ENCODE measurements at regions of chr12 and their contacts with region 1.

Region 1: GRCh38 chr12:9027161-9028059 is 38.1 kb downstream of the KLRG1 start:
- DNase-seq: peak; percentile 73
- H3K4me3 Mint-ChIP-seq: peak overlapping the region; percentile 8
- H3K27ac Mint-ChIP-seq: peak overlapping the region; percentile 82
- H3K4me1 Mint-ChIP-seq: peaks cover 14% of the 10 kb centered on the region
- H3K27me3 Mint-ChIP-seq: peaks cover 2% of the 10 kb centered on the region

Region 2: GRCh38 chr12:8493084-8493483 is 534.3 kb before region 1 on chr12:
- intact Hi-C with region 1: loop called (anchors 10 kb)
- DNase-seq: peak; percentile 82
- H3K4me3 Mint-ChIP-seq: peak overlapping the region; percentile 38
- H3K27ac Mint-ChIP-seq: peak overlapping the region; percentile 71
- H3K4me1 Mint-ChIP-seq: peaks cover 22% of the 10 kb centered on the region
- H3K27me3 Mint-ChIP-seq: peaks cover 43% of the 10 kb centered on the region

Region 3: GRCh38 chr12:8949342-8950220 is 77.8 kb before region 1 on chr12 and contains the start of gene M6PR:
- intact Hi-C with region 1: loop called (anchors 1 kb)
- DNase-seq: peak; percentile 97
- H3K4me3 Mint-ChIP-seq: peak within 1 kb of the TSS; percentile 98
- H3K27ac Mint-ChIP-seq: peak within 1 kb of the TSS; percentile 93
- H3K4me1 Mint-ChIP-seq: peaks cover 50% of the 10 kb centered on the region
- H3K27me3 Mint-ChIP-seq: no peaks in the 10 kb centered on the region
- total RNA-seq, gene M6PR: 160 and 167 TPM in 2 replicates

Region 4: DNA sequence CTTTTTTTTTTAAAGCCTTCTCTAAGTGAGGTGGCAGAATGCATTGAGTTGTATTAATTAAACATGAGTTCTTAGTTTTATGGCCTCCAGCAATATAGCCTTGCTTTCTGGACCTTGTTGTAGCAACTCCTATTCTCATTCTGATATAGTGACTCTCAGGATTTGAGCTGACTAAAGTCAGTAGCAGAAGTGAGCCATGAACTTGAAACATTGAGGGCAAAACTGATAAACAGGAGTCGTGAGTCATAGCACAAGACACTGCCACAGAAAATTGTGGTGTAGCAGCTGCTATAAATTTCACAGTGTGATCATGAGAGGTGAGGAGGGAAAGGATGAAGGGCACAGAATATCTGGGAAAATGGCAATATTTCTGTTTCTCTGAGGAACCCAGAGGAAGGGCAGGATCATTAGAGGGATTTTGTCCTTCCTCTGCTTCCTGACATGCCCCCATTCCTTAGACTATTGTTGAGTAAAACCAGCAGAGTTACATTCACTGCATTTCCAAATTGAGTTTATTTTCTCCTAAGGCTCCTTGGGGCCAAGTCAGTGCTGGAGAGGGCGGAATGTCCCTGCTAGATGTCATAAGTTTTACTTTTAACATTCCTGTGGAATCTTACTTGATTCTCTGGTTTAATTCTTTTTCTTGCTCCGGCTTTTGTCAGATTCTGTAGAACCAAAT is 30.6 kb before region 1 on chr12:
- intact Hi-C with region 1: loop called (anchors 1 kb)
- DNase-seq: peak; percentile 70
- H3K4me3 Mint-ChIP-seq: no peak overlapping the region
- H3K27ac Mint-ChIP-seq: no peak overlapping the region
- H3K4me1 Mint-ChIP-seq: peaks cover 15% of the 10 kb centered on the region
- H3K27me3 Mint-ChIP-seq: peaks cover 18% of the 10 kb centered on the region

Region 5: GRCh38 chr12:9244894-9245293 is 217.5 kb after region 1 on chr12:
- intact Hi-C with region 1: loop called (anchors 1 kb)
- DNase-seq: peak; percentile 66
- H3K4me3 Mint-ChIP-seq: peak overlapping the region; percentile 15
- H3K27ac Mint-ChIP-seq: peak overlapping the region; percentile 96
- H3K4me1 Mint-ChIP-seq: peaks cover 29% of the 10 kb centered on the region
- H3K27me3 Mint-ChIP-seq: peaks cover 16% of the 10 kb centered on the region